Activated CD4-positive, alpha-beta T cell treated with anti-CD3 and anti-CD28 coated beads, Interleukin-2, amount 10 ng/mL, durations not matched to agents 24 days and 14 days (primary cell): ENCODE measurements at regions of chr2 and their contacts with region 1.

Region 1: GRCh38 chr2:159904127-159904958 is 106.3 kb upstream of the CD302 start:
- DNase-seq: peak; percentile 93
- H3K4me3 Mint-ChIP-seq: peak within 1 kb of the TSS; percentile 98
- H3K27ac Mint-ChIP-seq: peak within 1 kb of the TSS; percentile 94
- H3K4me1 Mint-ChIP-seq: peaks cover 36% of the 10 kb centered on the region
- H3K27me3 Mint-ChIP-seq: no peaks in the 10 kb centered on the region

Region 2: DNA sequence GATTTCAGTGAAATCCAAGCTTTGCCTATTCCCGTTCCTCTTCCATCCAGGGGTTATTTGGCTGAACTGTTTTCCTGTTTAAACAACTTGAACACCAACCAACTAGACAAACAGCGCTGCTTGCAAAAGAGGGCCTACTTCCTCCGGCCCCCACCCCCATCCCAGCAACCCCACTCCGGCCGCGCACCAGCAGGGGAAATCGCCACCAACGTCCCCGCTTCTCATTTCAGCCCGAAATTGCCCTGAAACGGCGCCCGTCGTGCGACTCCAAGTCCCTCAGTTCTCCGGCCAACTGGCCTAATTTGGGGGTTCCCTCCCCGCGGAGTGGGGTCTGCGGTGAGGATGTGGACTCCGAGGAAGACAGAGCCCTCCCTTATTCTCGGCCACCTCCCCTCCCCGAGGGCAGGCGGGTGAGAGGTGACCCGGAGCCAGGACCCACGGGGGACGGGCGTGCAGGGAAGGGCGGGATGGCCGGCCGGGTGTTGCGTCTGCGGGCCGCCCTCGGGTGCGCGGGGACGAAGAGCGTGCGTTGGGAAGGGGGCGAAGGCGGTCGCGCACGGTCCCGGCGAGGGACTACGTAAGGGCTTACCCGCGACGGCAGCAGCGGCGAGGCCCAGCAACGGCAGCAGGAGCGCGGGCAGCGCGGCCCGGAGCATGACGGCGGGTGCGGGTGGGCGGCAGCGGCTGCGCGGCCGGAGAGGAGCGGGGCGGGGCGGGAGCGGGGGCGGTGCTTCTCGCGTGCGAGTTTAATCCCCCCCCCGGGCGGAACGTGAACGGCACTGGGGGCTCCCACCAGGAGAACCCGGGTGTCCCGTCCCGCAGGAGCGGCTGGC is 106.6 kb before region 1 on chr2 and contains the start of gene CD302:
- intact Hi-C with region 1: loop called (anchors 5 kb)
- DNase-seq: peak; percentile 68
- H3K4me3 Mint-ChIP-seq: peak within 1 kb of the TSS; percentile 70
- H3K27ac Mint-ChIP-seq: no peak within 1 kb of the TSS
- H3K4me1 Mint-ChIP-seq: peaks cover 6% of the 10 kb centered on the region
- H3K27me3 Mint-ChIP-seq: peaks cover 53% of the 10 kb centered on the region
- total RNA-seq, gene CD302: 0.54 and 0.72 TPM in 2 replicates